Calu3 (cell line): ENCODE measurements at regions of chr17 and their contacts with region 1.

Region 1: GRCh38 chr17:44533533-44534246 is 23.6 kb upstream of the FZD2 start:
- DNase-seq: peak; percentile 96
- H3K4me3 Mint-ChIP-seq: no peak overlapping the region
- H3K27ac Mint-ChIP-seq: peak overlapping the region; percentile 1
- H3K4me1 Mint-ChIP-seq: peaks cover 33% of the 10 kb centered on the region
- H3K27me3 Mint-ChIP-seq: peaks cover 26% of the 10 kb centered on the region
- CTCF ChIP-seq: peak; percentile 98

Region 2: GRCh38 chr17:44636562-44636961 is 102.9 kb after region 1 on chr17:
- CTCF ChIA-PET with region 1: interaction called, 19 read pairs
- intact Hi-C with region 1: loop called (anchors 1 kb)
- DNase-seq: no peak
- H3K4me3 Mint-ChIP-seq: no peak overlapping the region
- H3K27ac Mint-ChIP-seq: no peak overlapping the region
- H3K4me1 Mint-ChIP-seq: no peaks in the 10 kb centered on the region
- H3K27me3 Mint-ChIP-seq: peaks cover 4% of the 10 kb centered on the region
- CTCF ChIP-seq: peak; percentile 35

Region 3: DNA sequence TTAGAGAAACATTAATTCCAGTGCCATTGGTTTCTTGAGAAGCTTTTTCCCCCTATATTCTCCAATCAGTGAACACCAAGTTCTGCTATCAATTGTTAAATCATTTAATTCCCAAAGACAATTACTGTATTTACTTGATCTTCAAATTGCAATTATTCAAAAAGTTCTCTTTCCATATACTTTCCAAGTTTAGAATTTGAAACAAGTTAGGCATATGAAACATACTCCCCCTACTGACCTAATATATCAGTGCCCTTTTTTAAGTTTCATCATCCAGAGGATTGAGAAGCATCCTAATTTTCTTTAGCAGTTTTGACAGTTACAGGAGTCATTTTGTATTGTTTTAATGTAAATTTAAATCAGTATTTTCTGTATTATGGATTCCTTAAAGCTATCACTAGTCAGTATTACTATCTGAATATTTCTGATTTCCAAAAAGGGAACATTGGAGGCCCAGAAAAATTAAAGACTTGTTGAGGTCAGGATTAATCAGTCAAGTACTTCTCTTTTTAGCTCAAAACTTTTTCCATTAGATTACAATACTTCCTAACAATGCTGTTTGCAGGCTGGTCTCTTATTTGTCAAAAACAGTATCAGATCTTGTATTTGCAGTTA is 138.9 kb after region 1 on chr17:
- CTCF ChIA-PET with region 1: interaction called, 3 read pairs
- intact Hi-C with region 1: loop called (anchors 1 kb)
- DNase-seq: no peak
- H3K4me3 Mint-ChIP-seq: no peak overlapping the region
- H3K27ac Mint-ChIP-seq: no peak overlapping the region
- H3K4me1 Mint-ChIP-seq: no peaks in the 10 kb centered on the region
- H3K27me3 Mint-ChIP-seq: no peaks in the 10 kb centered on the region
- CTCF ChIP-seq: peak; percentile 48